Caco-2 (cell line): ENCODE measurements at regions of chr4 and their contacts with region 1.

Region 1: DNA sequence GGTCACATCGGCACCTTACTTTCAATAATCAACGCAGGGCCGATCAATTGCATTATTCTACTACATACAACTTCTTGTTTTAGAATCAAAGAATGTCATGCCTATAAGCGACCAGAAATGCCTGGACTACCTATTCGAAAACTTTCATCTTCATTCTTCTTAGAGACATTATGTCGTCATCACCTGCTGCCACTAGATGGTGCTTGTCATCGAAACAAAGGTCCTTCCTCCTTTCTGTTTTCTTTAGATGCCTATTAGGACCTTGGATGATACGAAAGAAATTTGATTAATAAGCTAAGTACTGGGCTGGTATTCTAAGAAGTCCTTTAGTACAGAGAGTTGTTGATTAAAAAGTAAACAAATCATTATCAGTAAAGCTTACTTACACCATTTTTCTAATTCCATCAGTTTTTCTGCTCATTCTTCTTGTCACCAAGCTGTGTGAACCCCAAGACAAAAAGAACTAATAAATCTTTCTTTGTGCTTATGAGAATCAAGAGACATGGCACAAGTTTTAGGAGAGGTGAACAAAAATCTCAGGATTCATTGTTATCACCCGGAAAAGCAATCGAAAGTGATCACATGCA is 154.5 kb upstream of the SLC4A4 start:
- DNase-seq: peak; percentile 35 to 39
- H3K4me3 ChIP-seq: no peak overlapping the region
- H3K4me3 Mint-ChIP-seq: no peak overlapping the region
- H3K27ac Mint-ChIP-seq: no peak overlapping the region
- H3K4me1 ChIP-seq: peaks cover 3% of the 10 kb centered on the region; the same call in 1 of the 2 replicates
- H3K4me1 Mint-ChIP-seq: peaks cover 7% of the 10 kb centered on the region
- H3K27me3 ChIP-seq: peaks cover 3% of the 10 kb centered on the region; the same call in 1 of the 2 replicates
- H3K27me3 Mint-ChIP-seq: peaks cover 23% of the 10 kb centered on the region
- CTCF ChIP-seq: peak; percentile 60 to 68

Region 2: DNA sequence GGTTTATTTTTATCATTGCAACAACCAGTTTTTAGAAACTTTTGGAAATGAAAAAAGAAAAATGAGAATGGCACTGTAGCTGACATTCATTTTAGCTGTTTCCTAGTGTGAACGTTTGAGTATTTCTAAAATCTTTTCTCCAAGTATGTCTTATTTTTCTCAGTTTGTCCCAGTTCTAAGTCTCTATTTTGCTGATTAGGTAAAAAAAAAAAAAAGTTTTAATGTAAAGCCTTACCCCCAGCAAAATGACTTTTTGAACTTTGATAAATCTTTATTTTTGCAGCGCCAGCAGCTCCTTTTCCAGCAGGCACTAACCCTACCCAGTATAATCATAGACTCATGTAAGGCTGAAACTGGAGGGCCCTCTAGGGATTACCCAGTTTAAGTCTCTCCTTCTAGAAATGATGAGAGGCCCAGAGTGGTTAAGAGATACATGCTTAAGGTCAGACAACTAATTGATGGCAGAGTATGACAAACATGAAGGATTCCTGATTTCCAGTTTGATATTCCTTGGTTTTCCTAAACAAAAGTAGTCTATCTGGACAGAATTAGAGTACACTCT is 70.2 kb after region 1 on chr4:
- CTCF ChIA-PET with region 1: interaction called, 3 read pairs
- POLR2A ChIA-PET with region 1: no interaction called
- intact Hi-C with region 1: loop called (anchors 5 kb)
- DNase-seq: no peak
- H3K4me3 ChIP-seq: no peak overlapping the region
- H3K4me3 Mint-ChIP-seq: no peak overlapping the region
- H3K27ac Mint-ChIP-seq: no peak overlapping the region
- H3K4me1 ChIP-seq: 0 out of 2 replicates have a peak, but pooled peaks cover 3% of the 10 kb centered on the region
- H3K4me1 Mint-ChIP-seq: no peaks in the 10 kb centered on the region
- H3K27me3 ChIP-seq: no peaks in the 10 kb centered on the region
- H3K27me3 Mint-ChIP-seq: peaks cover 3% of the 10 kb centered on the region
- CTCF ChIP-seq: no peak

Region 3: GRCh38 chr4:71559957-71560571 is 375.8 kb after region 1 on chr4:
- CTCF ChIA-PET with region 1: no interaction called
- POLR2A ChIA-PET with region 1: no interaction called
- intact Hi-C with region 1: no loop called
- DNase-seq: no peak
- H3K4me3 ChIP-seq: no peak overlapping the region
- H3K4me3 Mint-ChIP-seq: no peak overlapping the region
- H3K27ac Mint-ChIP-seq: no peak overlapping the region
- H3K4me1 ChIP-seq: no peaks in the 10 kb centered on the region
- H3K4me1 Mint-ChIP-seq: no peaks in the 10 kb centered on the region
- H3K27me3 ChIP-seq: no peaks in the 10 kb centered on the region
- H3K27me3 Mint-ChIP-seq: no peaks in the 10 kb centered on the region
- CTCF ChIP-seq: no peak